ENCODE measurements at regions of chr7 and their contacts with region 1.

Region 1: DNA sequence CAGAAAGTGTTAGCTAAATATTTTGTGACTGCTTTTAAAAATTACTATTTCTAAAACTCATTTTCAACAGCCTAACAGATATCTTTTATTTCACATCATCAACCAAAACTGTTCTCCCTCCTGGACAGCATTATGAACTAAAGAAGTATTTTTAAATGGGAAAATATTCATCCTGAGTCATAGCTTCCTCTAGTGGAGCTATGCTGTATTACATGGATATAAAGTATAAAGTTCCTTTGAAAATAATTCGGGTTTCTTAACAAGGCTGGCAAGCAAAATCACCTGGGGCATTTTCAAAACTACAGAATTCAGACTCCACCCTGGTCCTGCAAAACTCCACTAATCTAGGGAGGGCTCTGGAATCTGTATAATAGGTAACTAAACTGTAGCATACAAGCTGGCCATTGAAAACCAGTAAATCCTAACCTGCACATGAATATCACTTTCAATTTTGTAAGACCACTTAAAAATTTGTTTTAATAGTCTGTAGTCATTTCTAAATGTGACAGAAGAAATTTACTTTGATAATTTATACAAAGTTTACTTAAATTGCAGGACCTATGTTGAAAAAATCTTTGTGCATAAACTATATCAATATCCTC is 53.5 kb downstream of the SCIN start:
- DNase-seq: peak; percentile 29
- H3K4me3 ChIP-seq: peak overlapping the region in 1 of 2 experiments; percentile 19; a peak in 1 of 4 replicates
- H3K27ac ChIP-seq: no peak overlapping the region
- H3K4me1 ChIP-seq: peaks cover 0 to 4% of the 10 kb centered on the region in 2 experiments; a peak in 1 of 4 replicates
- H3K27me3 ChIP-seq: no peaks in the 10 kb centered on the region
- CTCF ChIP-seq: peak; percentile 99
- EP300 ChIP-seq: no peak
- RAD21 ChIP-seq: peak; percentile 79

Region 2: DNA sequence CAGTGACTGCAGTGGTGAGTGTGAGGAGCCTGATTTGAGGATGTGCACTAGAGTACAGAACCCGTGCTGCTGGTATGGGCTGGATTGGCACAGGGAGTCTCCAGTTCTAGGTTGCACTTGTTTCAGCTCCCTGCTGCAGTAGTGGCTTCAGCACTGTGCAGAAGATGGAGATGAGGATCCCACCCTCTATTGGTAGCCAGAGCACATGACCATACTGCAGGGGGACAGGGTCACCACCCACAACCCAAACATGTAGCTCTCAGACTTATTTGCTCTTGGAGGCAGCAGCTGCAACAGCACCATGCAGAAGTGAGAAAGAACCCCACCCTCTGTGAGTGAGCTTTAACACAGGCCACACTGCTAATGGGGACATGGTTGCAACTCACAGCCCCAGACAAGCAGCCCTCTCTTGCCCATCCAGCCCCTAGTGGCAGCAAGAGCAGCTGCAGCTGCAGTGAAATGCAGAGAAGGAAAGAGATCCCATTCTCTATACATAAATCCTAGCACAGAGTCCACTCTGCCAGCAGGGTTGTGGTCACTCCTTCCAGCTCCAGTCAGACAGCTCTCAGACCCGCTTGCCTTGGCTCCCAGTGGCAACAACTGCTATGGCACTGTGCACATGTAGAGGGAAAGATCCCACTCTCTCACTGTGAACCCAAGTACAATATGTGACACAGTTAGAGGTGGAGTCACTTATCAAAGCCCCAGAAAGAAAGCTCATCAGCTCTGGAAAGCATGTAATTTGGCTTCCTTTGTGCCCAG is 104.9 kb before region 1 on chr7:
- CTCF ChIA-PET with region 1: interaction called, 124 read pairs
- POLR2A ChIA-PET with region 1: no interaction called
- DNase-seq: peak; percentile 35
- H3K4me3 ChIP-seq: no peak overlapping the region
- H3K27ac ChIP-seq: no peak overlapping the region
- H3K4me1 ChIP-seq: no peaks in the 10 kb centered on the region
- H3K27me3 ChIP-seq: no peaks in the 10 kb centered on the region
- CTCF ChIP-seq: peak; percentile 52
- EP300 ChIP-seq: no peak
- RAD21 ChIP-seq: no peak

Region 3: DNA sequence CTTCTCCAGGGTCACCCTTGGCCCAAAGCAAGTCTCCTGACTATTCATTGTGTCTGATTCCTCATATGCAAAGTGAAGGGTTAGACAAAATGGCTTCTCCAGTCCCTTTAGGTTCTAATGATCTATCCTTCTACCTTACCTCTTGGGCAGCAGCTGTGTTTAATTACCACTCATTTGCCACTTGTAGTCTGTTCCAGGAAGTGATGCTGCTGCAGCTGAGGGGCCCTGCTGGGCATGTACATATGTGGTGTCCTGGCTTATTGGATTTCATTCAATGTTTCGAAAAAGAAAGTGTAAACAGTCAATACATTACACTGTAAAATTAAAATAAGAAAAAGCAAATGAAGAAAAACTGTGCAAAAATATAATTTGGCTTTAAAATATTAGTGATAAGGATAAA is 16.9 kb before region 1 on chr7:
- CTCF ChIA-PET with region 1: interaction called, 15 read pairs
- POLR2A ChIA-PET with region 1: no interaction called
- DNase-seq: peak; percentile 39
- H3K4me3 ChIP-seq: no peak overlapping the region
- H3K27ac ChIP-seq: peak overlapping the region in 1 of 2 experiments; percentile 41; a peak in 2 of 4 replicates
- H3K4me1 ChIP-seq: peaks cover 0 to 7% of the 10 kb centered on the region in 2 experiments; a peak in 2 of 4 replicates
- H3K27me3 ChIP-seq: no peaks in the 10 kb centered on the region
- CTCF ChIP-seq: no peak
- EP300 ChIP-seq: peak in 1 of 2 experiments; percentile 22; a peak in 1 of 4 replicates
- RAD21 ChIP-seq: no peak